Activated B cell treated with CpG ODN at 0.5 μM for 24 hours (primary cell): ENCODE measurements at regions of chr1 and their contacts with region 1.

Region 1: DNA sequence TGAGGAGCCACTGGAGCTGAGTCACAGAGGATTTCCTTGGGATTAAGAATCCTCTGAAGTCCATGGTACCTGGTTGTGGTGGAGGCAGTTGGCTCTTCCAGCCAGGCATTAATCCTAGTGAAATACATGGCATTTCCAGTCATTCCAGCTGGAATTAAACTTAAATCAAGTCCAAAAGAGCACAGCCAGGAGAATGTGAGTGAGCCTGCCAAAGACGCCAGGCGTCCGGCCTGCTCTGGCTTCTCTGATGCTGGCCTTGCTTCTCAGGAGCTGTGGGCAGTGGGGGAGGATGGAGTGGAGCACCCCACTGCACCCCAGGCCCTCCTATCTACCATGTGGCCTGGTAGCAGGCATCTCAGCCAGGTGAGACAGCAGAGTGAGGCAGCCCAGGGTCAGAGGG is 23.4 kb upstream of the TENT5C start:
- DNase-seq: no peak
- ATAC-seq: no peak
- H3K4me3 Mint-ChIP-seq: no peak overlapping the region
- H3K27ac Mint-ChIP-seq: no peak overlapping the region
- H3K4me1 Mint-ChIP-seq: no peaks in the 10 kb centered on the region
- H3K27me3 Mint-ChIP-seq: no peaks in the 10 kb centered on the region
- CTCF ChIP-seq: no peak

Region 2: DNA sequence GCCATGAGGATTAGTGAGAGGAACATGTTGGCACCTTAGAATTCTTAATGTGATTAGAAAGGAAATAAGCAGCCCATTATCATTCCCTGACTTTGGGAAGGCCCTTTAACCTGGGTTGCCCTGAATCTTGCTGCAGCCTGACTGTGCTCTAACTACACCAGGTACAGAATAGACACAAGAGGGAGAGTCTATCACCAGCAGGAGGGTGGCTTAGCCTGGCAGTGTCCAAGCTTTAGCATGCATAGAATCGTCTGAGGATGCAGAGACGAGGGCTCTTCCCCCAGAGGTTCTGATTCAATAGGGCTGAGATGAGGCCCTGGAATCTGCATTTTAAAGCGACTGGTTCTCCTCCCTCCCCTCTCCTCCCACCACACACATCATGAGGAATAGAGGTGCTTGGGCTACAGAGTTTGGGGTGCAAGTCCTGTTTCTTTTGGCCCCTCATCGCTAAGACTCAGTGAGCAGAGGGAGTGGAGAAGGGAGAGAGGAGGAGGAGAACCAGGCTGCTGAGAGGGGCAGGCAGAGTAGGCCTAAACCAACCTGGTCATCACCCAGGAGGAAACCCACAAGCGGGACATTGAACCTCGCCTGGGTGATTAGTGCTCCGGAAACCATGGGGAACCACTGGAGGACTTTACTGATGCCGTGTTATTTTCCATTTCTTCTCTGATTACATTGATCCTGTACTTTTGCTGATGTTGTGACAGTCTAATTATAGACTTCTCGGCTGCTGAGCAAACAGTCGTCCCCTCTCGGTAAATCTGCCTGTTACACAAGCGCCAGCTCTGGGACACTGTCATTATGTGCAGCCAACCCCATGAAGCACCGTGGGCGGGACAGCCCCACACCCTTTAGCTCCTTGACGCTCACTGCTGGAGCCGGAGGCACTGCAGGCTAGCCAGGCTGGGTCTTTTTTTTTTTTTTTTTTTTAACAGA is 17.1 kb after region 1 on chr1:
- CTCF ChIA-PET with region 1: no interaction called
- POLR2A ChIA-PET with region 1: no interaction called
- intact Hi-C with region 1: loop called (anchors 2 kb)
- DNase-seq: peak; percentile 4
- ATAC-seq: no peak
- H3K4me3 Mint-ChIP-seq: no peak overlapping the region
- H3K27ac Mint-ChIP-seq: no peak overlapping the region
- H3K4me1 Mint-ChIP-seq: peaks cover 25% of the 10 kb centered on the region
- H3K27me3 Mint-ChIP-seq: no peaks in the 10 kb centered on the region
- CTCF ChIP-seq: no peak